WTC11 (cell line): ENCODE measurements at regions of chr12 and their contacts with region 1.

Region 1: GRCh38 chr12:52372216-52373154 is 5.2 kb upstream of the KRT85 start:
- DNase-seq: peak; percentile 81
- ATAC-seq: peak; percentile 91
- H3K4me3 Mint-ChIP-seq: no peak overlapping the region
- H3K27ac Mint-ChIP-seq: no peak overlapping the region
- H3K4me1 Mint-ChIP-seq: no peaks in the 10 kb centered on the region
- H3K27me3 Mint-ChIP-seq: no peaks in the 10 kb centered on the region
- CTCF ChIP-seq: peak; percentile 50; the same call in 1 of the 2 replicates

Region 2: DNA sequence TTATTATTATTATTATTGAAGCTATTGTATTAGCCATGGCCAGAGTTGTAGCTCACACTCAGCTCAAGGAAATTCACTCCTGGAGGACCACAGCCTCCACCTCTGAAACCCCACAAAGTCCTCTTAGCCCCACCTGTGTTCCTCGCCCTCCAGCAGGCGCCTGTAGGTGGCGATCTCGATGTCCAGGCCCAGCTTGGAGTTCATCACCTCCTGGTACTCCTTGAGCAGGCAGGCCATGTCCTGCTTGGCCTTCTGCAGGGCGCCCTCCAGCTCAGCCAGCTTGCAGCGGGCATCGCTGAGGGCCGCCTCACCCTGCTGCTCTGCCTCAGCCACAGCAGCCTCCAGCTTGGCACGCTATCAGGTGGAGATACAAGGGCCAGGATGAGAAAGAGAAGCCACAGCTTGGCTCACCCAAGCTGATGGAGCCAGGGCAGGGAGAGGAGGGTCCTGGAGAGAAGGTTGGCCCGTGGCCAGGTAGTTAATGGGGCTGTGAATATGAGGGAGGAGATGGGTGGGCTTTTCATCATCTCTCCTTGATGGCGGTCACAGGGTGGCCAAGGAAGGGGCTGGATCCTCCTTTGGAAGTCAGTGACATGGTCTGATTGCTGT is 10.3 kb before region 1 on chr12:
- CTCF ChIA-PET with region 1: interaction called, 19 read pairs
- POLR2A ChIA-PET with region 1: no interaction called
- DNase-seq: peak; percentile 57
- ATAC-seq: peak; percentile 26; the same call in 1 of the 2 replicates
- H3K4me3 Mint-ChIP-seq: no peak overlapping the region
- H3K27ac Mint-ChIP-seq: no peak overlapping the region
- H3K4me1 Mint-ChIP-seq: peaks cover 15% of the 10 kb centered on the region; the same call in 1 of the 2 replicates
- H3K27me3 Mint-ChIP-seq: no peaks in the 10 kb centered on the region
- CTCF ChIP-seq: peak; percentile 31; the same call in 1 of the 2 replicates

Region 3: DNA sequence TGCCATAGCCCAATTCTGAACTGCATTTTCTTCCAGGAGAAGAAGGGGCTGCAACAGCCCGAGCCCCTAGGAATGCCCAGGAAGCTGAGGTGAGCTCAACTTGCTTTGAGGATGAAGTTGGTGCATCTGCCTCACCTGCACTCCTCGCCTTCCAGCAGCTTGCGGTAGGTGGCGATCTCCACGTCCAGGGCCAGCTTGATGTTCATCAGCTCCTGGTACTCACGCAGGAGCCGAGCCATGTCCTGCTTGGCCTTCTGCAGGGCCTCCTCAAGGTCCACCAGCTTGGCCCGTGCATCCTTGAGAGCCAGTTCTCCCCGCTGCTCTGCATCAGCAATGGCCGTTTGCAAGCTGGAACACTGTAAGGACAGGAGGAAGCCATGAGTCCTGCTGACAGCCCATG is 55.6 kb after region 1 on chr12:
- CTCF ChIA-PET with region 1: interaction called, 10 read pairs
- POLR2A ChIA-PET with region 1: no interaction called
- DNase-seq: peak; percentile 25
- ATAC-seq: no peak
- H3K4me3 Mint-ChIP-seq: no peak overlapping the region
- H3K27ac Mint-ChIP-seq: no peak overlapping the region
- H3K4me1 Mint-ChIP-seq: peaks cover 4% of the 10 kb centered on the region; the same call in 1 of the 2 replicates
- H3K27me3 Mint-ChIP-seq: peaks cover 2% of the 10 kb centered on the region; the same call in 1 of the 2 replicates
- CTCF ChIP-seq: no peak

Region 4: DNA sequence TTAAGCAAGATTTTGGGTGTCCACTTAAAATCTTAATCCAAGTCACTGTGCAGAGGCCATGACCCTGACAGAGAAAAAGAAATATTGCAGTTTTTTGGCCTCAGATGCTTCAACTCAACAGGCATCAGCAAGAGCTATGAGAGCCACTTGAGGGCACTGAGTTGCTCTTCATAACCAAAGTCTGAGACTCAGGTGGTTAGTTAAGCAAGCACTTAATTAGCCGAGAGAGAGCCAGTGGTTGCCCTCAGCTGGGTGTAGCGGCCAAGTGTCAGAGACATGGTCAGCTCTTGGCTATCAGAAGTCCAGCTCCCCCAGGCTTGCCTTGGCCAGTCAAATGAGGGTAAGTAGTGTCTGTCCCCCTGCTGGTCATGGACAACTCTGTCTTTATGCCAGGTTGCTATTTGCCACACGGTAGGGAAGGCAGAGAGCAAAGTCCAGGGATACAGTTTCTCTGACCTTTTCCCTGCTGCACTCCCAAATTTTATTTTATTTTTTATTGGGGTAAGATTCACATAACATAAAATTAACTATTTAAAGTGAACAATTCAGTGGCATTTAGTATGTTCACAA is 189.5 kb after region 1 on chr12:
- CTCF ChIA-PET with region 1: interaction called, 12 read pairs
- POLR2A ChIA-PET with region 1: no interaction called
- DNase-seq: no peak
- ATAC-seq: 0 out of 2 replicates have a peak, but pooled peaks have one; percentile 22
- H3K4me3 Mint-ChIP-seq: no peak overlapping the region
- H3K27ac Mint-ChIP-seq: no peak overlapping the region
- H3K4me1 Mint-ChIP-seq: no peaks in the 10 kb centered on the region
- H3K27me3 Mint-ChIP-seq: no peaks in the 10 kb centered on the region; the same call in 1 of the 2 replicates
- CTCF ChIP-seq: no peak

Region 5: DNA sequence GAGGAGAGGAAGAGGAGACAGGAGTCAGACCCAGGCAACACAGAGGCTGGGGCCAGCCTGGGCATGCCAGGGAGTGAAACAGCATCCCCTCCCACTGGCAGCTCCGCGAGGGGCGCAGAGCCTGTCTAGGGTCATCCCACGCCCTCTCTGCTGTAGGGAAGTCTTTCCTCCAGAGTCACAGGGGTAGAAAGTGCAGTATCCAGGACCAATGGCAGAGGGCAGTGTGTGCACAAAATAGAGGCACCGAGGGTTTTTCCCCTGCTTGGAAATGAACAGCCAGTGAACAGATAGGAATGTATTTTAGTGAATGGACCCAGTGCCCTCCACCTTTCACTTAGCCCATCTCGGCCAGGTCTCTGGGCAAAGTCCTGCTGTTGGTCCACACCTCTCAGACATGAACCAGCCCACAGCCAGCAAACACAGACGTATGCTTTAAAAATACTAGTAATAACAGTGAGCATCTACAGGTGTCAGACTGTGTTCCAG is 210.5 kb after region 1 on chr12:
- CTCF ChIA-PET with region 1: interaction called, 15 read pairs
- POLR2A ChIA-PET with region 1: no interaction called
- DNase-seq: peak; percentile 74
- ATAC-seq: peak; percentile 97
- H3K4me3 Mint-ChIP-seq: no peak overlapping the region; the same call in 1 of the 2 replicates
- H3K27ac Mint-ChIP-seq: no peak overlapping the region
- H3K4me1 Mint-ChIP-seq: peaks cover 6% of the 10 kb centered on the region
- H3K27me3 Mint-ChIP-seq: no peaks in the 10 kb centered on the region
- CTCF ChIP-seq: no peak; the same call in none of the 2 replicates